ENCODE measurements at regions of chr14 and their contacts with region 1.

Region 1: GRCh38 chr14:105473677-105474482 is 741 bp upstream of the CRIP2 start:
- DNase-seq: peak in 2 of 3 donors; percentile 51 to 61
- H3K4me3 ChIP-seq: peak overlapping the region; percentile 22 to 73 (median 24)
- H3K4me3 Mint-ChIP-seq: peak overlapping the region; percentile 66 to 81
- H3K27ac ChIP-seq: no peak overlapping the region
- H3K27ac Mint-ChIP-seq: peak overlapping the region in 1 of 7 donors; percentile 8
- H3K4me1 ChIP-seq: peaks cover 17 to 33% of the 10 kb centered on the region in 2 donors
- H3K4me1 Mint-ChIP-seq: peaks cover 15% of the 10 kb centered on the region
- H3K27me3 ChIP-seq: peaks cover 24 to 49% of the 10 kb centered on the region in 2 donors
- H3K27me3 Mint-ChIP-seq: peaks cover 34 to 57% (median 41%) of the 10 kb centered on the region in 3 donors
- CTCF ChIP-seq: no peak

Region 2: GRCh38 chr14:105389976-105390848 is 83.7 kb before region 1 on chr14:
- intact Hi-C with region 1: loop called in 1 of 2 experiments (anchors 5 kb)
- DNase-seq: peak; percentile 51 to 68 (median 66)
- H3K4me3 ChIP-seq: peak overlapping the region in 1 of 3 experiments; percentile 49
- H3K4me3 Mint-ChIP-seq: peak overlapping the region; percentile 69 to 80
- H3K27ac ChIP-seq: peak overlapping the region; percentile 82 to 87
- H3K27ac Mint-ChIP-seq: peak overlapping the region; percentile 85 to 96 (median 93)
- H3K4me1 ChIP-seq: peaks cover 84 to 99% of the 10 kb centered on the region in 2 donors
- H3K4me1 Mint-ChIP-seq: peaks cover 72% of the 10 kb centered on the region
- H3K27me3 ChIP-seq: no peaks in the 10 kb centered on the region
- H3K27me3 Mint-ChIP-seq: no peaks in the 10 kb centered on the region
- CTCF ChIP-seq: no peak

Measured in CD14-positive monocyte (primary cell).